ENCODE measurements at regions of chr7 and their contacts with region 1.

Region 1: DNA sequence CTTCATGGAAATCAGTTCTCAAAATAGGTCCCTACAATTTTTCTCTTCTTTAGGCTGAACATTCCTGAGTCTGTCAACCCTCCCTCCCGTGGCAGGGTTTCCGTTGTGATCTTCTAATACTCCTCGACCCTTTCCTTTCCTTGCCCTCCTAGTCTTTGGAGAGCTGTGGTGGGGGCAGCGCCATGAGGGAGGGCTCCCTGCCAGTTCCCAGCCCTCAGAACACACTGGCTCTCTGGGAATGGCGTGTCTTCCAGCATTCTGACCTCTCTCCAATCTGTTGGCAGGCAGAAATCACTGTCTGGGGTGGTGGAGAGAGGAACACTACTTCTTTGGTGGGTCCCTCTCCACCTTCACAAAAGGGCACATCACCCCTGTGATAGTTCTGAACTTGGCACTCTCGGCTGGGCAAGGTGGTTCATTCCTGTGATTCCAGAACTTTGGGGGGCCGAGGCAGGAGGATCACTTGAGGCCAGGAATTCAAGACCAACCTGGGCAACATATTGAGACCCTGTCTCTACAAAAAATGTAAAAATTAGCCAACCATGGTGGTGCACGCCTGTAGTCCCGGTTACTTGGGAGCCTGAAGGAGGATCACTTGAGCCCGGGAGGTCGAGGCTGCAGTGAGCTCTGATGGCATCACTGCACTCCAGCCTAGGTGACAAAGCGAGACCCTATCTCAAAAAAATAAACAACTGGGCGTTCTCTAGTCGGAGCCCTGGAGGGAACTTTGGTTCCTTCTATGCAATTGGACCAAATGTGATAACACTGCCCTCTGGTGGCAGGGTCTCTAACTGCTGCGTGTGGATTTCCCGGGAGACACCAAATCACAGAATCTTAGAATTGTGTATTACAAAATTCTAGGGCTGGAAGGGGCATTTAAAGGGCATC is 13.1 kb upstream of the ARPC1A start:
- DNase-seq: peak in 1 of 2 donors; percentile 50
- ATAC-seq: peak; percentile 63 to 64
- H3K4me3 ChIP-seq: no peak overlapping the region
- H3K27ac ChIP-seq: no peak overlapping the region
- H3K4me1 ChIP-seq: no peaks in the 10 kb centered on the region
- H3K27me3 ChIP-seq: no peaks in the 10 kb centered on the region
- CTCF ChIP-seq: peak; percentile 80 to 92 (median 87)
- POLR2A ChIP-seq: no peak

Region 2: DNA sequence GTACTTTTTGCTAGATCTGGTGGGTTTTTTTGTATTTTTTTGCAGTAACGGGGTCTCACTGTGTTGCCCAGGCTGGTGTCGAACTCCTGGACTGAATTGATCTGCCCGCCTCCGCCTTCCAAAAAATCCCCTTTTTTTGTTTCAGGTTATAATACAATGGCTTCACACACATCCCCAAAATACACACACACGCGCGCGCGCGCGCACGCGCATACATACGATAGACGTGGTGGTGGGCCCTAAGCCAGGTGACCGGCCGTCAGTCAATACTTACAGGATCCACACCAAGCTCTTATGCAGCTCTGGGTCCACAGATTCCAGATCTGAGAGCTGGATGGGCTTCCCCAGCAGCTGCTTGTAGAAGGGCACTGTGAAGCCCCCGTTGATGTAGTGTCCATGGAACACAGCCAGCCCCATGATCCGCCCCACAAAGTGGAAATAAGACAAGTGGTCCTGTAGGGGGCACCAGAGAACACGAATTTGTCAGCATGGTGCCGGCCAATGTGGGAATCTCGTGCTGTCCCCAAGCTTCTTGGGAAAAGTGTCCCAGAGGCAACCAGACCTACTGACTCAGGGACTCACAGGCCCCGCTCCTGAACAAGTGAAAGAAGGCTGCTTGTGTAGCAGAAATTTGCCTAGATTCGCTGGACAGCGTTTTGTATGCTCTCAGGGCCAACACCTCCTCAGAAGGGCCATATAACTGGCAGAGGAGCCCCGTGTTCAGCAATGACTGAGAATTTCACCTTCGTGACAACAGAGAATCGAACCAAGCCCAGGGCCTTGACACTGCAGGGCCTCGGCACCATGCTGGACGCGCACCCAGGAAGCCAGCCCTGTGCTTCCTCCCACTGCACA is 272.2 kb before region 1 on chr7:
- in situ Hi-C with region 1: loop called (anchors 5 kb)
- intact Hi-C with region 1: loop called (anchors 1 kb)
- DNase-seq: peak; percentile 75 to 86
- ATAC-seq: peak; percentile 88 to 94
- H3K4me3 ChIP-seq: no peak overlapping the region
- H3K27ac ChIP-seq: peak overlapping the region; percentile 41 to 73 (median 66)
- H3K4me1 ChIP-seq: no peaks in the 10 kb centered on the region
- H3K27me3 ChIP-seq: no peaks in the 10 kb centered on the region
- CTCF ChIP-seq: peak; percentile 75 to 87 (median 83)
- POLR2A ChIP-seq: no peak

Region 3: DNA sequence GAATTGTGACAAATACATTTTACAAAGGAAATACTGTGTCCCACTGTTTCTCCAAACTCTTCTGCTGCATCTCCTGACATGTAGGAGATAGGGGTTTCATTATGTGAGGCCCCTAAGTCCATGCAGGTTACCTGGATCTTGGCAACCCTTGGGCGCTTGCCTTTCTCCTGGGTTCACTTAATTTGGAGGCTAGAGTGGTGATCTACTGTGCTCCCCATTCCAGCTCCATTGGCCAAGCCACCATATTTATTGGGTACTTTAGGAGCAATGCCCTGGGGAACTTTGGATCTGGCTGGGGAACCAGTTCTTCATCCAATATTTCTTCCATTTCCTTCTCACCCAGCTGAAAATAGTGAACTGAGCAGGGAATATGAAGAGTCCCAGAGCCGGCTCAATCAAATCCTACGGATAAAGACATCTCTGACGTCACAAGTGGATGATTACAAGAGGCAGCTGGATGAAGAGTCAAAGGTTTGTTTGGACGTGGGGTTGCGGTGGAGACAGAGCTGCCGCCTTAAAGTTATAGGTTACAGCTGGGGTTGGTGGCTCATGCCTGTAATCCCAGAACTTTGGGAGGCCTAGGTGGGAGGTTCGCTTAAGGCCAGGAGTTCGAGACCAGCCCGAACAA is 21.5 kb before region 1 on chr7:
- in situ Hi-C with region 1: no loop called
- intact Hi-C with region 1: no loop called
- DNase-seq: no peak
- ATAC-seq: no peak
- H3K4me3 ChIP-seq: no peak overlapping the region
- H3K27ac ChIP-seq: no peak overlapping the region
- H3K4me1 ChIP-seq: no peaks in the 10 kb centered on the region
- H3K27me3 ChIP-seq: no peaks in the 10 kb centered on the region
- CTCF ChIP-seq: no peak
- POLR2A ChIP-seq: no peak

Region 4: DNA sequence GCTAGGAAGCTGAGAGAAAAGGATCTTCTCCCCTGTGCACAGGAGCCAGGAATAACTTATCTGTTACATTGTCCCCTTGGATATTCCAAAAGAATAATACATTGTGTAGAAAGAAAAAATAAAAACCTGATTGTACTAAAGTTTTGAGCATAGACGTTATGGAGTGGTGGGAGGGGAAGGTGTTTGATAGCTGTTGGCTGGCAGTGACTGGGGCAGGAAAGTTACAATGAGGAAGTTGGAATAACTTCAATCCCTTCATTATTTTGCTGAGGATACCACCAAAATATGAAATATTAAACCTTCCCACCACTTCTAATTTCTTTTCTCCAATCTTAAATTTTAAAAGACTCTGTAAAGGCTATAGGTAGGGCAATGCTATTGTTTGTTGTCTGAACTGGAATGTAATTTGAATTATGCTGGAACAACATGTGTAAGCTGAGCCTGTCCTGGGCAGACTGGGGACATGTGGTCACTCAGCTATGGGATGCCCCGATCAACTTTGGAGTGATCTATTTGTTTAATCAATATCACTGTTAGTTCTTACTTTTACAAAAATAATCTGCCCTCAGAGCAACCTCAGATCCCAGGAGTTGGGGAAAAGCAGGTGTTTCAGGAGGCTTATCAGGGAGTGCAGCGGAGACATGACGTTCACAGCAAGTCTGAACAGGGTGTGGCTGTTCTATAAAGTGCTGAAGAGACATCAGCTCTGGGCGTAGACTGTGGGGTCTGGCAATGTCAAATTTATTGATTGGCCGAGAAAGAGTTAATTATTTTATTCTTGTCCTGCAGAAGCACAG is 536.1 kb after region 1 on chr7:
- in situ Hi-C with region 1: no loop called
- intact Hi-C with region 1: no loop called
- DNase-seq: no peak
- ATAC-seq: no peak
- H3K4me3 ChIP-seq: no peak overlapping the region
- H3K27ac ChIP-seq: no peak overlapping the region
- H3K4me1 ChIP-seq: no peaks in the 10 kb centered on the region
- H3K27me3 ChIP-seq: no peaks in the 10 kb centered on the region
- CTCF ChIP-seq: no peak
- POLR2A ChIP-seq: no peak